Heart right ventricle (tissue), 16 donors: ENCODE measurements at regions of chr12 and their contacts with region 1.

Region 1: GRCh38 chr12:23585782-23586163 is 363.7 kb downstream of the SOX5 start:
- DNase-seq: no peak
- ATAC-seq: no peak
- H3K4me3 ChIP-seq: no peak overlapping the region
- H3K27ac ChIP-seq: no peak overlapping the region
- H3K4me1 ChIP-seq: no peaks in the 10 kb centered on the region
- H3K27me3 ChIP-seq: no peaks in the 10 kb centered on the region
- CTCF ChIP-seq: no peak

Region 2: GRCh38 chr12:23640754-23641153 is 55.0 kb after region 1 on chr12:
- intact Hi-C with region 1: loop called in 1 of 10 experiments (anchors 10 kb)
- DNase-seq: no peak
- ATAC-seq: no peak
- H3K4me3 ChIP-seq: no peak overlapping the region
- H3K27ac ChIP-seq: no peak overlapping the region
- H3K4me1 ChIP-seq: no peaks in the 10 kb centered on the region
- H3K27me3 ChIP-seq: no peaks in the 10 kb centered on the region
- CTCF ChIP-seq: no peak

Region 3: GRCh38 chr12:24522736-24523135 is 937.0 kb after region 1 on chr12:
- intact Hi-C with region 1: no loop called
- DNase-seq: no peak
- ATAC-seq: no peak
- H3K4me3 ChIP-seq: no peak overlapping the region
- H3K27ac ChIP-seq: no peak overlapping the region
- H3K4me1 ChIP-seq: no peaks in the 10 kb centered on the region
- H3K27me3 ChIP-seq: no peaks in the 10 kb centered on the region
- CTCF ChIP-seq: no peak